Panc1 (cell line): ENCODE measurements at regions of chr6 and their contacts with region 1.

Region 1: GRCh38 chr6:122068291-122068769 is 331.1 kb upstream of the HSF2 start:
- DNase-seq: no peak
- ATAC-seq: no peak
- H3K4me3 ChIP-seq: no peak overlapping the region
- H3K27ac ChIP-seq: no peak overlapping the region
- H3K4me1 ChIP-seq: no peaks in the 10 kb centered on the region
- H3K27me3 ChIP-seq: no peaks in the 10 kb centered on the region
- CTCF ChIP-seq: no peak

Region 2: GRCh38 chr6:121830736-121831135 is 237.6 kb before region 1 on chr6:
- CTCF ChIA-PET with region 1: no interaction called
- POLR2A ChIA-PET with region 1: no interaction called
- in situ Hi-C with region 1: no loop called
- intact Hi-C with region 1: no loop called
- DNase-seq: no peak
- ATAC-seq: no peak
- H3K4me3 ChIP-seq: no peak overlapping the region
- H3K27ac ChIP-seq: no peak overlapping the region
- H3K4me1 ChIP-seq: no peaks in the 10 kb centered on the region
- H3K27me3 ChIP-seq: no peaks in the 10 kb centered on the region
- CTCF ChIP-seq: no peak

Region 3: DNA sequence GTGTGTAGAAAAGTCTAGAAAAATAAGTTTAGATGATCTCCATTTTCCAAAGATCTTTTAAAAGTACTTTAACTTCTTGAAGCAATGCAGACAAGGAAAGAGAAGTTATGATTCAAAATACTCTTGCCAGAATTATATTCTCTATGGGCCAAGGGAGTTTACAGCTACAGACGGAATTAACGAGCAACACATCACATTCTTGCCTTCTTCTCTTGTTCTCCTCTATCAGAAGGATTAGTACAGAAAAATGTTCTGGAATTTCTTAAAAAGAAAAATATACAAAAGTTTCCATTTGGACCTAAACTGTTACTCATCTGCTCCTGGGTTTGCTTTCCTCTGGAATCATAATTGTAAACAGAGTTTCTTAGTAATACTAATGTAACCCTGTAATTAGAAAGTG is 46.4 kb after region 1 on chr6:
- CTCF ChIA-PET with region 1: no interaction called
- POLR2A ChIA-PET with region 1: interaction called, 16 read pairs
- in situ Hi-C with region 1: no loop called
- intact Hi-C with region 1: no loop called
- DNase-seq: no peak
- ATAC-seq: no peak
- H3K4me3 ChIP-seq: no peak overlapping the region
- H3K27ac ChIP-seq: no peak overlapping the region
- H3K4me1 ChIP-seq: no peaks in the 10 kb centered on the region
- H3K27me3 ChIP-seq: no peaks in the 10 kb centered on the region
- CTCF ChIP-seq: no peak

Region 4: GRCh38 chr6:122372647-122373046 is 304.3 kb after region 1 on chr6:
- CTCF ChIA-PET with region 1: no interaction called
- POLR2A ChIA-PET with region 1: no interaction called
- in situ Hi-C with region 1: no loop called
- intact Hi-C with region 1: loop called (anchors 10 kb)
- DNase-seq: no peak
- ATAC-seq: no peak
- H3K4me3 ChIP-seq: no peak overlapping the region
- H3K27ac ChIP-seq: no peak overlapping the region
- H3K4me1 ChIP-seq: no peaks in the 10 kb centered on the region
- H3K27me3 ChIP-seq: peaks cover 2% of the 10 kb centered on the region; the same call in 1 of the 2 replicates
- CTCF ChIP-seq: peak; percentile 41; the same call in 1 of the 2 replicates